CD8-positive, alpha-beta T cell (primary cell): ENCODE measurements at regions of chr19 and their contacts with region 1.

Region 1: DNA sequence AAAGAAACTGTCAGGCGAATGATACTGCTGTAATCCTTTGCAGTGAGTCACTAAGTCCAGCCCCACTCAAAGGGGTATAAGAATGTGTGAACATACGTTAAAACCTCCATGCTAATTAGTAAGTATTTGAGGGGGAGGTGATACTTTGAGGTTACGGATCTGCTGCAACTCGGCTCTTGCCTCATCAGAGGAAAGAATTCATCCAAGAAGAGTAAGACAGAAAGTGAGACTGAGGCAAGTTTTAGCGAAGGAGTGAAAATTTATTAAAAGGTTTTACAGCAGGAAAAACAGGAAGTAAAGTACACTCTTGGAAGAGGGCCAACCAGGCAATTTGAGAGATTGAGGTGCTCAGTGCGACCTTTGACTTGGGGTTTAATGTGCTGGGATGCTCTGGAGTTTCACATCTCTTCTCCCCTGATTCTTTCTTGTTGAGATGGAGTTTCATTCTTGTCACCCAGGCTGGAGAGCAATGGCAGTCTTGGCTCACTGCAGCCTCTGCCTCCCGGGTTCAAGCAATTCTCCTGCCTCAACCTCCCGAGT is 9.8 kb downstream of the CLEC4M start:
- DNase-seq: peak in 3 of 9 experiments; percentile 17 to 60 (median 57)
- ATAC-seq: peak; percentile 95
- H3K4me3 ChIP-seq: no peak overlapping the region
- H3K4me3 Mint-ChIP-seq: peak overlapping the region; percentile 57
- H3K27ac ChIP-seq: peak overlapping the region in 1 of 2 experiments; percentile 3
- H3K27ac Mint-ChIP-seq: peak overlapping the region; percentile 59
- H3K4me1 ChIP-seq: peaks cover 9% of the 10 kb centered on the region
- H3K4me1 Mint-ChIP-seq: peaks cover 18% of the 10 kb centered on the region
- H3K27me3 ChIP-seq: no peaks in the 10 kb centered on the region
- H3K27me3 Mint-ChIP-seq: no peaks in the 10 kb centered on the region
- CTCF ChIP-seq: no peak

Region 2: GRCh38 chr19:7527516-7528191 is 245.2 kb before region 1 on chr19:
- CTCF ChIA-PET with region 1: no interaction called
- POLR2A ChIA-PET with region 1: no interaction called
- intact Hi-C with region 1: no loop called
- DNase-seq: no peak
- ATAC-seq: no peak
- H3K4me3 ChIP-seq: no peak overlapping the region
- H3K4me3 Mint-ChIP-seq: no peak overlapping the region
- H3K27ac ChIP-seq: no peak overlapping the region
- H3K27ac Mint-ChIP-seq: no peak overlapping the region
- H3K4me1 ChIP-seq: peaks cover 9% of the 10 kb centered on the region
- H3K4me1 Mint-ChIP-seq: peaks cover 4% of the 10 kb centered on the region
- H3K27me3 ChIP-seq: no peaks in the 10 kb centered on the region
- H3K27me3 Mint-ChIP-seq: no peaks in the 10 kb centered on the region
- CTCF ChIP-seq: no peak

Region 3: GRCh38 chr19:7692417-7693088 is 80.3 kb before region 1 on chr19:
- CTCF ChIA-PET with region 1: no interaction called
- POLR2A ChIA-PET with region 1: no interaction called
- intact Hi-C with region 1: loop called in 1 of 2 experiments (anchors 5 kb)
- DNase-seq: peak in 5 of 9 experiments; percentile 11 to 89 (median 52)
- ATAC-seq: peak; percentile 66
- H3K4me3 ChIP-seq: no peak overlapping the region
- H3K4me3 Mint-ChIP-seq: no peak overlapping the region
- H3K27ac ChIP-seq: peak overlapping the region; percentile 32 to 73
- H3K27ac Mint-ChIP-seq: no peak overlapping the region
- H3K4me1 ChIP-seq: peaks cover 4% of the 10 kb centered on the region
- H3K4me1 Mint-ChIP-seq: peaks cover 6% of the 10 kb centered on the region
- H3K27me3 ChIP-seq: peaks cover 0 to 4% of the 10 kb centered on the region in 2 experiments
- H3K27me3 Mint-ChIP-seq: peaks cover 2% of the 10 kb centered on the region
- CTCF ChIP-seq: no peak

Region 4: GRCh38 chr19:7744871-7745650 is 27.8 kb before region 1 on chr19:
- CTCF ChIA-PET with region 1: no interaction called
- POLR2A ChIA-PET with region 1: no interaction called
- intact Hi-C with region 1: no loop called
- DNase-seq: no peak
- ATAC-seq: no peak
- H3K4me3 ChIP-seq: no peak overlapping the region
- H3K4me3 Mint-ChIP-seq: no peak overlapping the region
- H3K27ac ChIP-seq: no peak overlapping the region
- H3K27ac Mint-ChIP-seq: no peak overlapping the region
- H3K4me1 ChIP-seq: no peaks in the 10 kb centered on the region
- H3K4me1 Mint-ChIP-seq: no peaks in the 10 kb centered on the region
- H3K27me3 ChIP-seq: no peaks in the 10 kb centered on the region
- H3K27me3 Mint-ChIP-seq: peaks cover 12% of the 10 kb centered on the region
- CTCF ChIP-seq: no peak

Region 5: DNA sequence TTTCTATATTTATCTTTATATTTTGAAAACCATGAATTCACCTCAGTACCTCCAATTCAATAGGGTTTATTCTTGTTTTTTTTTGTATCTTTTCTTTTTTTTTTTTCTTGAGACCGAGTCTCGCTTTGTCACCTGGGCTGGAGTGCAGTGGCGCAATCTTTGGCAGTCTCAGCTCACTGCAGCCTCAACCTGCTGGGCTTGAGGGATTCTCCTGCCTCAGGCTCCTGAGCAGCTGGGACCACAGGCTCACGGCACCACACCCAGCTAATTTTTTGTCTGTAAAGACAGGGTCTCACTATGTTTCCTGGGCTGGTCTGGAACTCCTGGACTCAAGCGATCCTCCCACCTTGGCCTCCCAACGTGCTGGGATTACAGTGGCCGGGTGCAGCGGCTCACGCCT is 34.1 kb after region 1 on chr19:
- CTCF ChIA-PET with region 1: interaction called, 4 read pairs
- POLR2A ChIA-PET with region 1: no interaction called
- intact Hi-C with region 1: loop called in 1 of 2 experiments (anchors 2 kb)
- DNase-seq: no peak
- ATAC-seq: no peak
- H3K4me3 ChIP-seq: no peak overlapping the region
- H3K4me3 Mint-ChIP-seq: no peak overlapping the region
- H3K27ac ChIP-seq: no peak overlapping the region
- H3K27ac Mint-ChIP-seq: no peak overlapping the region
- H3K4me1 ChIP-seq: no peaks in the 10 kb centered on the region
- H3K4me1 Mint-ChIP-seq: peaks cover 4% of the 10 kb centered on the region
- H3K27me3 ChIP-seq: no peaks in the 10 kb centered on the region
- H3K27me3 Mint-ChIP-seq: peaks cover 11% of the 10 kb centered on the region
- CTCF ChIP-seq: no peak